Posterior vena cava (tissue), 2 donors: ENCODE measurements at regions of chr2 and their contacts with region 1.

Region 1: GRCh38 chr2:24231461-24231881 is 56.6 kb downstream of the FAM228A start:
- DNase-seq: no peak

Region 2: GRCh38 chr2:24214880-24215279 is 16.6 kb before region 1 on chr2:
- intact Hi-C with region 1: no loop called
- DNase-seq: no peak

Region 3: DNA sequence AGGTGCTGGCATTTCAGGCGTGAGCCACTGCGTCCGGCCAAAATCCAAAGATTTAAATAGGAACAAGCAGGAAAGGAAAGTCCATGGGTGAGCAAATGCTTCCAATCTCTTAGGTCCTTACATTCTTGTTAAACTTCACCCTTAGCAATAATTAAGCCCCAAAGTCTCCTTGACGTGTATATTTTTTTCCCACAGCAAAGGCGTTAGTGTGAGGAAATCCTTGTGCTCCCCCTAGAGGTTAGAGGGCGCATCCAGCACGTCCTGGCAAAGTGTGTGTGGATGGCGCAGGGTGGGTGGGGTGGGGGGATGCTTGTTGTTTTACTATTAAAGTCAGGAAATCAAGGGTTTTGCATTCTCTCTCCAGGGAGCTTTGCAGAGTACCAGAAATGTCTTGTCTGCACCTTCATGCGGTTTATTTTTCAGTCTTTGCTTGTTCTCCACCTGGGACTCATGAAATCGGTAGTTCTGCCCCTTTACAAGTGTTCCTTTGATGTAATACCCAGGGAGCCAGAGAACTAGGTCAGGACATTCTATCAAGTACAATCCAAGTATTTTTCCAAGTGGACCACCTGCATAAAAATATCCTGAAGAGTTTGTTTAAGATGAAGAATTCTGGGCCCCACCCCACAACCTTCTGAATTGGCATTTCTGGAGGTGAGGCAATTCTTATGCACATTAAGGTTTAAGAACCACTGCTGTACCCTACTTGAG is 151.0 kb after region 1 on chr2:
- intact Hi-C with region 1: loop called in 1 of 2 experiments (anchors 10 kb)
- DNase-seq: no peak